Mammary epithelial cell (primary cell): ENCODE measurements at regions of chr16 and their contacts with region 1.

Region 1: GRCh38 chr16:74064120-74064735 is 232.4 kb upstream of the PSMD7 start:
- DNase-seq: no peak
- H3K4me3 ChIP-seq: no peak overlapping the region
- H3K27ac ChIP-seq: no peak overlapping the region
- H3K4me1 ChIP-seq: no peaks in the 10 kb centered on the region
- H3K27me3 ChIP-seq: no peaks in the 10 kb centered on the region
- CTCF ChIP-seq: peak in 1 of 2 donors; percentile 46

Region 2: GRCh38 chr16:73923951-73924350 is 140.3 kb before region 1 on chr16:
- CTCF ChIA-PET with region 1: no interaction called
- dilution Hi-C with region 1: no loop called
- in situ Hi-C with region 1: no loop called
- intact Hi-C with region 1: no loop called
- DNase-seq: no peak
- H3K4me3 ChIP-seq: no peak overlapping the region
- H3K27ac ChIP-seq: no peak overlapping the region
- H3K4me1 ChIP-seq: no peaks in the 10 kb centered on the region
- H3K27me3 ChIP-seq: no peaks in the 10 kb centered on the region
- CTCF ChIP-seq: no peak

Region 3: DNA sequence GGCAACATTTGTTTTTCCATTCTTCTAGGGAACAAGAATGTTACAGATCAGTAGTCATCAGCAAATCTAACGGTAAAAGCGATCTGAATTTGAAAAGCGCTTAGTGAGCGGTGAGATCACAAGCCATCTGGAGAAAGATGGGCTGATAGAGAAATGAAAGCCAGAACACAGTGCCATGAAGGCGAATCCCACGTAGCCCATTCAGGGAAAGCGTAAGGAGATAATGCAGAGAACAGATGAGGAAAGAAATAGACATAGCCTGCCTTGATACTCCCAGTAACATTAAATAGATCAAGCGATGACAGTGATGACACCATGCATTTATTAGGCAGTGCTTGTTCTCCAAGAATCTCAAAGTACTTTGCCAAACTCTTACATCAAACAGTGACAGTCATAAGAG is 49.3 kb after region 1 on chr16:
- CTCF ChIA-PET with region 1: no interaction called
- dilution Hi-C with region 1: no loop called
- in situ Hi-C with region 1: no loop called
- intact Hi-C with region 1: no loop called
- DNase-seq: no peak
- H3K4me3 ChIP-seq: no peak overlapping the region
- H3K27ac ChIP-seq: no peak overlapping the region
- H3K4me1 ChIP-seq: no peaks in the 10 kb centered on the region
- H3K27me3 ChIP-seq: no peaks in the 10 kb centered on the region
- CTCF ChIP-seq: no peak

Region 4: GRCh38 chr16:74226338-74226954 is 162.2 kb after region 1 on chr16:
- CTCF ChIA-PET with region 1: interaction called, 14 read pairs
- dilution Hi-C with region 1: no loop called
- in situ Hi-C with region 1: no loop called
- intact Hi-C with region 1: loop called (anchors 1 kb)
- DNase-seq: no peak
- H3K4me3 ChIP-seq: no peak overlapping the region
- H3K27ac ChIP-seq: no peak overlapping the region
- H3K4me1 ChIP-seq: no peaks in the 10 kb centered on the region
- H3K27me3 ChIP-seq: peaks cover 2% of the 10 kb centered on the region
- CTCF ChIP-seq: peak; percentile 24 to 52